ENCODE measurements at regions of chr2 and their contacts with region 1.

Region 1: GRCh38 chr2:68251187-68251854 is 1.0 kb downstream of the PPP3R1 start:
- DNase-seq: peak; percentile 75
- H3K4me3 Mint-ChIP-seq: peak overlapping the region; percentile 92
- H3K27ac Mint-ChIP-seq: peak overlapping the region; percentile 97
- H3K4me1 Mint-ChIP-seq: peaks cover 50% of the 10 kb centered on the region
- H3K27me3 Mint-ChIP-seq: peaks cover 6% of the 10 kb centered on the region

Region 2: GRCh38 chr2:68062680-68063387 is 188.5 kb before region 1 on chr2 and contains the start of gene C1D:
- intact Hi-C with region 1: loop called (anchors 1 kb)
- DNase-seq: peak; percentile 90
- H3K4me3 Mint-ChIP-seq: peak within 1 kb of the TSS; percentile 93
- H3K27ac Mint-ChIP-seq: peak within 1 kb of the TSS; percentile 96
- H3K4me1 Mint-ChIP-seq: peaks cover 35% of the 10 kb centered on the region
- H3K27me3 Mint-ChIP-seq: peaks cover 10% of the 10 kb centered on the region
- total RNA-seq, gene C1D: 28.3 and 31.0 TPM in 2 replicates

Region 3: DNA sequence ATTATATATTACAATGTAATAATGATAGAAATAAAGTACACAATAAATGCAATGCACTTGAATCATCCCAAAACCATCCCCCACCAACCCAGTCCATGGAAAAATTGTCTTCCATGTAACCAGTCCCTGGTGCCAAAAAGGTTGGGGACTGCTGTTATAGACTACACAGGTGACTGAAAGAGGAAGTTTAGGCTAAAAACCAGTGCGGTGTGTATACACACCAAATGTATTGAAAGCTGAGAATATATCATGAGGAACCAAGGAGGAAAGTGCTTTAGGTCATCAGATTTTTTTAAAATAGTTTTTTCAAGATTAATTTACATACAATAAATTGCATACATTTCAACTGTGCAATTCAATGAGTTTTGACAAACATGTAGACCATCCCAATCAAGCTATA is 168.0 kb before region 1 on chr2:
- intact Hi-C with region 1: no loop called
- DNase-seq: no peak
- H3K4me3 Mint-ChIP-seq: no peak overlapping the region
- H3K27ac Mint-ChIP-seq: no peak overlapping the region
- H3K4me1 Mint-ChIP-seq: no peaks in the 10 kb centered on the region
- H3K27me3 Mint-ChIP-seq: peaks cover 17% of the 10 kb centered on the region

Region 4: GRCh38 chr2:68190991-68191731 is 60.2 kb before region 1 on chr2:
- intact Hi-C with region 1: loop called (anchors 1 kb)
- DNase-seq: no peak
- H3K4me3 Mint-ChIP-seq: no peak overlapping the region
- H3K27ac Mint-ChIP-seq: peak overlapping the region; percentile 64
- H3K4me1 Mint-ChIP-seq: peaks cover 58% of the 10 kb centered on the region
- H3K27me3 Mint-ChIP-seq: no peaks in the 10 kb centered on the region

Region 5: DNA sequence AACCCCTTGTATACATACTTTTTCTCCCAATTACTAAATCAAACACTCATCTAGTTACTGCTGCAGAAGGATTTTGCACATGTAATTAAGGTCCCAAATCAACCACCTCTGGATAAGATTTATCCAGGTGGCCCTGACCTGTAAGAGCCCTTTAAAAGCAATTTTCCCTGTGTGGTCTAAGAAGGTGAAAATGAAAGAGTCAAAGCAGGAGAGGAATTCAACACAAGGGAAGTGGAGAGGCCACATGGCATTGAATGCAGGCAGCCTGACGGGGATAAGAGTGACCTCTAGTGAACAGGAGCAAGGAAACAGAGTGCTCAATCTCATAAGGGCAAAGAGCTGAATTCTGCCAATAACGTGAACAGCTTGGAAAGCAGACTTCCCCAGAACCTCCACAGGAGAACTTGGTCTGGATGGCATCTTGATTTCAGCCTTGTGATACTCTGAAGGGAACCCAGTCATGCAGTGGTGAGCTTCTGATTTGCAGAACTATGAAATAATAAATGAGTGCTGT is 26.1 kb before region 1 on chr2:
- intact Hi-C with region 1: loop called (anchors 2 kb)
- DNase-seq: no peak
- H3K4me3 Mint-ChIP-seq: no peak overlapping the region
- H3K27ac Mint-ChIP-seq: peak overlapping the region; percentile 20
- H3K4me1 Mint-ChIP-seq: peaks cover 68% of the 10 kb centered on the region
- H3K27me3 Mint-ChIP-seq: no peaks in the 10 kb centered on the region

Region 6: GRCh38 chr2:68362069-68362468 is 110.7 kb after region 1 on chr2:
- intact Hi-C with region 1: loop called (anchors 5 kb)
- DNase-seq: peak; percentile 65
- H3K4me3 Mint-ChIP-seq: peak overlapping the region; percentile 32
- H3K27ac Mint-ChIP-seq: peak overlapping the region; percentile 36
- H3K4me1 Mint-ChIP-seq: peaks cover 26% of the 10 kb centered on the region
- H3K27me3 Mint-ChIP-seq: peaks cover 12% of the 10 kb centered on the region

Region 7: DNA sequence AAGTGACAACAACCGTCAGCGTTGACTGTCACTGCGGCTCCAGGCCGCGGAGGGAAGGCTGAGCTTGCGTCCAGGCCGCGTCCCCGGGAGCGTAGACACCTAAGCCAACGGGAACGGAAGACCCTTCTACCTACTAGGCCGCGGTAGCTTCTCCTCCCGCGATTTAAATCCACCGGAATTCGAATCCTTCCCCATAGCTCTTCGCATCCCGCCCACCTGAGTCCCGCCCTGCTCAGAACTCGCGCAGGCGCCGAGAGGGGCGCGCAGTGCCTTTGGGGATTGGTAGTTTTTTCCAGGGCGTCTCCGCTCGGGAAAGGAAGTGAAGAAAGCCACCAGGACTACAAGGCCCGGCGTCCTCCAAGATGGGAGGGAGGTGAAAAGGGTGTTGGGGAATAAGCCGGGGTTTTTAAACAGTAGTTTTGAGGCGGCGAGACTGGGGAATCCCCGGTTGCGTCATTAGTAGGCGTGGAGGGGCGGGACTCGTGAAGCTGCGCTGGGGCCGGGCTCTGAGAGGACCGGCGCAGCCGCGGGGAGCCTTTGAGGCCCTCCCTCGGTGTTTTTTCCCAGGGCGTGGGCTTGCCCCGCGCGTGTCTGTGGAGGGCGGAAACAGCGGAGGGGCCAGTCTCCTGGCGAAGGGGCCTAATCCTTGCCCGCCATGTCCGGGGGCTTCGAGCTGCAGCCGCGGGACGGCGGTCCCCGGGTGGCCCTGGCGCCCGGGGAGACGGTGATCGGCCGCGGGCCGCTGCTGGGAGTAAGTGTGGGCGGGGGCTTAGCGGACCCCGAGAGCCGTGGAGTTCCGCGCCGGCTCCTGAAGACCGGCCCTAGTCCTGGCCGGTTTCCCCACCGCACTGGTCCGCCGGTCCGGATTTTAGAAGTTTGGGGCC is 216.0 kb after region 1 on chr2 and contains the starts of genes APLF and FBXO48:
- intact Hi-C with region 1: loop called (anchors 1 kb)
- DNase-seq: peak; percentile 97
- H3K4me3 Mint-ChIP-seq: peak within 1 kb of the TSS; percentile 97
- H3K27ac Mint-ChIP-seq: peak within 1 kb of the TSS; percentile 91
- H3K4me1 Mint-ChIP-seq: peaks cover 48% of the 10 kb centered on the region
- H3K27me3 Mint-ChIP-seq: no peaks in the 10 kb centered on the region
- total RNA-seq, gene APLF: 2.3 and 3.0 TPM in 2 replicates
- total RNA-seq, gene FBXO48: 1.3 and 1.4 TPM in 2 replicates

Region 8: DNA sequence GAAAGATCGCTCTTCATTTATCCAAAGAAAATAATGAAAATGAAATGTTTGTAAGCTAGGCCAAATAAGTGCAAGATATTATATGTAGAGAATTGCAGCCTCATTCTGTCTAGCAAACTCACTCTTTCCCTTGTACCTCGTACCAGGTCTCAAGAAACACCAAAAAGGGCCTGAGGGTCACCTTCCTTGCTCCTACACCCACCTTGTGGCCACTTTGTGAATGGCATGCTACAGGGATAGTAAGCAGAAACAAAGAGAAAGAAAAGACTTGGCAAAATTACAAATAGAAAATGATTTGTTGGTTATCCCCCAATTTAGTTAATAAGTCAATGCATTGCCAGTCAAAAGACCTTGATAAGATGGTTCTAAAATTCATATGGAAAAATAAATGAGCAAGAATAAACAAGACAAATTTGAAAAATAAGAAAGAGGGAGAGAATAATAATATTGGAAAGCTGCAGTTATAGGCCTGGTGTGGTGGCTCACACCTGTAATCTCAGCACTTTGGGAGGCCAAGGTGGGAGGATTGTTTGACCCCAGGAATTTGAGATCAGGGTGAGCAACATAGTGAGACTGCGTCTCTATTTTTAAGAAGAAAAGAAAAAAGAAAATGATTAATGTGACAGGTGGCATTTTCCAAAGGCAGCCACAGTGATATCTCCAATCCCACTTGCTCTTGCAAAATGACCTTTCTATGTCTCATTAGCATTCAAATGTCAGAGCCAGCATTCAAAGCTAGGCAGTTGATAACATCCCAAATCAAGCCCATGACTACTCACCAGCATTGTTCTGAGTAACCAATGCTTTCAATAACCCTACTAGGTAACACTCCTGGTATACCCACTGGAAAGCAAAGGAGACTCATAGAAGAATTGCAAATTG is 658.7 kb after region 1 on chr2:
- intact Hi-C with region 1: loop called (anchors 2 kb)
- DNase-seq: peak; percentile 56
- H3K4me3 Mint-ChIP-seq: peak overlapping the region; percentile 12
- H3K27ac Mint-ChIP-seq: peak overlapping the region; percentile 70
- H3K4me1 Mint-ChIP-seq: peaks cover 33% of the 10 kb centered on the region
- H3K27me3 Mint-ChIP-seq: no peaks in the 10 kb centered on the region

Measured in activated T-helper 1 cell treated with anti-CD3 and anti-CD28 coated beads, Interleukin-12 subunit alpha, Interleukin-12 subunit beta, Interleukin-2, Interleukin-4 antibody, amounts not matched to agents 30 ng/mL and 10 ng/mL and 1 ng/mL, durations not matched to agents 14 hours and 24 hours and 36 hours (primary cell).